CD8-positive, alpha-beta T cell (primary cell): ENCODE measurements at regions of chr1 and their contacts with region 1.

Region 1: DNA sequence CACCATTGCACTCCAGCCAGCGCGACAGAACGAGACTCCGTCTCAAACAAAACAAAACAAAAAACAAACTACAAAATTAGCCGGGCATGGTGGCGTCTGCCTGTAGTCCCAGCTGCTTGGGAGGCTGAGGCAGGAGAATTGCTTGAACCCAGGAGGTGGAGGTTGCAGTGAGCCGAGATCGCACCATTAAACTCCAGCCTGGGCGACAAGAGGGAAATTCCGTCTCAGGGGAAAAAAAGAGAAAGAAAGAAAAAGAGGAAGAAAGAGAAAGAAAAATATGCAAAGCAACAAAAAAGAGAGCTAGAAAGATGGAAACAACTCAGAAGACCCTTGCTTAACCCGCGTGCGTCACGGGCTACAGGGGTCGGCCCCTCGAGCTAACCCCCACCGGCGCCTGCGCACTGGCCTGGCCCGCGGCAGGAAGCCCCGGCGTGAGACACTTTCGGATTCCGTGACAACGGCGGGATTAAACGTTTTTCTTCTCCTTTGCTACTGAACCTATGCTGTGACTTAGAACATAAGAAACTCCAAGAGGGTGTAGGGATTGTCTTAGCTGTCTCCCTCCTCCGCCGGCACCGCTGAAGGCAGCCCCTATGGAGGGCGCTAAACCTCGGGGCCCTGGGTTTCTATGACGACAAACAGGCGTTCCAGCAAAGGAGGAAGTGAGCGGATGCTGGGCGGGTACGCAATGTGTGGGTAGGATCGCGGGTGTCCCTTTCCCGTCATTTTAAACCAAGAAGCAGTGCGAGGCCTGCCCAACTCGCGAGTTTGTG is at the start of gene AXDND1:
- DNase-seq: peak; percentile 80 to 96 (median 90)
- ATAC-seq: peak; percentile 92
- H3K4me3 ChIP-seq: peak within 1 kb of the TSS; percentile 72 to 73
- H3K4me3 Mint-ChIP-seq: peak within 1 kb of the TSS; percentile 99
- H3K27ac ChIP-seq: peak within 1 kb of the TSS; percentile 92 to 99
- H3K27ac Mint-ChIP-seq: peak within 1 kb of the TSS; percentile 100
- H3K4me1 ChIP-seq: peaks cover 6% of the 10 kb centered on the region
- H3K4me1 Mint-ChIP-seq: peaks cover 12% of the 10 kb centered on the region
- H3K27me3 ChIP-seq: no peaks in the 10 kb centered on the region
- H3K27me3 Mint-ChIP-seq: no peaks in the 10 kb centered on the region
- CTCF ChIP-seq: no peak
- total RNA-seq, gene AXDND1: 0.98 to 1.6 TPM

Region 2: DNA sequence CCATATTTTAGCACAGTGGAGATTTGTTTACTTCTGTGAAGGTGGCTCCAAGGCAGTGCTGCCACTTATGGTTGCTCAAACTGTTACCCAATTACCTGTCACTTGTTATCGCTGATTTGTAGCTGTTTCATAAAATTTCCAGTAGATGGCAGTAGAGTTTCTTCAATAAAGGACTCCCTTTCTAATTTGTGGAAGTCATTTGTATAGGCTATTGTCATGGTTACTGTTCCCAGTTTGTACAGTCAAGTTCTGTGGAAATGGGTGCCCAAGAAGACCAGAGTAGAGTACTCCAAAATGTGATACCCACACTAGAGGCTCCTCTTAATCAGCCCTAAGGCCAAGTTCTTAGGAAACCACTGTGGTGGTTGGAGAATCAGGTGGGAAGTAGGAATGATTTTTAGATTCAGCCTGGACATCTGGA is 1054.8 kb before region 1 on chr1:
- CTCF ChIA-PET with region 1: no interaction called
- POLR2A ChIA-PET with region 1: no interaction called
- intact Hi-C with region 1: loop called in 1 of 2 experiments (anchors 5 kb)
- DNase-seq: peak in 2 of 9 experiments; percentile 16 to 42
- ATAC-seq: no peak
- H3K4me3 ChIP-seq: no peak overlapping the region
- H3K4me3 Mint-ChIP-seq: no peak overlapping the region
- H3K27ac ChIP-seq: no peak overlapping the region
- H3K27ac Mint-ChIP-seq: no peak overlapping the region
- H3K4me1 ChIP-seq: no peaks in the 10 kb centered on the region
- H3K4me1 Mint-ChIP-seq: no peaks in the 10 kb centered on the region
- H3K27me3 ChIP-seq: no peaks in the 10 kb centered on the region
- H3K27me3 Mint-ChIP-seq: no peaks in the 10 kb centered on the region
- CTCF ChIP-seq: peak; percentile 54

Region 3: GRCh38 chr1:178725603-178726517 is 639.6 kb before region 1 on chr1:
- CTCF ChIA-PET with region 1: no interaction called
- POLR2A ChIA-PET with region 1: no interaction called
- intact Hi-C with region 1: loop called (anchors 1 to 5 kb)
- DNase-seq: peak in 8 of 9 experiments; percentile 31 to 85 (median 62)
- ATAC-seq: peak; percentile 81
- H3K4me3 ChIP-seq: peak overlapping the region; percentile 67 to 90
- H3K4me3 Mint-ChIP-seq: peak overlapping the region; percentile 85
- H3K27ac ChIP-seq: peak overlapping the region; percentile 58 to 69
- H3K27ac Mint-ChIP-seq: peak overlapping the region; percentile 75
- H3K4me1 ChIP-seq: peaks cover 10% of the 10 kb centered on the region
- H3K4me1 Mint-ChIP-seq: peaks cover 23% of the 10 kb centered on the region
- H3K27me3 ChIP-seq: no peaks in the 10 kb centered on the region
- H3K27me3 Mint-ChIP-seq: peaks cover 3% of the 10 kb centered on the region
- CTCF ChIP-seq: no peak

Region 4: GRCh38 chr1:179002552-179003345 is 362.8 kb before region 1 on chr1:
- CTCF ChIA-PET with region 1: interaction called, 10 read pairs
- POLR2A ChIA-PET with region 1: no interaction called
- intact Hi-C with region 1: loop called in 1 of 2 experiments (anchors 1 kb)
- DNase-seq: peak; percentile 40 to 83 (median 71)
- ATAC-seq: peak; percentile 76
- H3K4me3 ChIP-seq: no peak overlapping the region
- H3K4me3 Mint-ChIP-seq: no peak overlapping the region
- H3K27ac ChIP-seq: no peak overlapping the region
- H3K27ac Mint-ChIP-seq: no peak overlapping the region
- H3K4me1 ChIP-seq: peaks cover 24% of the 10 kb centered on the region
- H3K4me1 Mint-ChIP-seq: peaks cover 20% of the 10 kb centered on the region
- H3K27me3 ChIP-seq: no peaks in the 10 kb centered on the region
- H3K27me3 Mint-ChIP-seq: no peaks in the 10 kb centered on the region
- CTCF ChIP-seq: peak; percentile 91

Region 5: GRCh38 chr1:179121159-179121938 is 244.2 kb before region 1 on chr1:
- CTCF ChIA-PET with region 1: interaction called, 75 read pairs
- POLR2A ChIA-PET with region 1: interaction called, 3 read pairs
- intact Hi-C with region 1: loop called (anchors 1 kb)
- DNase-seq: peak in 7 of 9 experiments; percentile 6 to 63 (median 50)
- ATAC-seq: peak; percentile 44
- H3K4me3 ChIP-seq: no peak overlapping the region
- H3K4me3 Mint-ChIP-seq: no peak overlapping the region
- H3K27ac ChIP-seq: no peak overlapping the region
- H3K27ac Mint-ChIP-seq: no peak overlapping the region
- H3K4me1 ChIP-seq: no peaks in the 10 kb centered on the region
- H3K4me1 Mint-ChIP-seq: no peaks in the 10 kb centered on the region
- H3K27me3 ChIP-seq: no peaks in the 10 kb centered on the region
- H3K27me3 Mint-ChIP-seq: no peaks in the 10 kb centered on the region
- CTCF ChIP-seq: peak; percentile 55

Region 6: DNA sequence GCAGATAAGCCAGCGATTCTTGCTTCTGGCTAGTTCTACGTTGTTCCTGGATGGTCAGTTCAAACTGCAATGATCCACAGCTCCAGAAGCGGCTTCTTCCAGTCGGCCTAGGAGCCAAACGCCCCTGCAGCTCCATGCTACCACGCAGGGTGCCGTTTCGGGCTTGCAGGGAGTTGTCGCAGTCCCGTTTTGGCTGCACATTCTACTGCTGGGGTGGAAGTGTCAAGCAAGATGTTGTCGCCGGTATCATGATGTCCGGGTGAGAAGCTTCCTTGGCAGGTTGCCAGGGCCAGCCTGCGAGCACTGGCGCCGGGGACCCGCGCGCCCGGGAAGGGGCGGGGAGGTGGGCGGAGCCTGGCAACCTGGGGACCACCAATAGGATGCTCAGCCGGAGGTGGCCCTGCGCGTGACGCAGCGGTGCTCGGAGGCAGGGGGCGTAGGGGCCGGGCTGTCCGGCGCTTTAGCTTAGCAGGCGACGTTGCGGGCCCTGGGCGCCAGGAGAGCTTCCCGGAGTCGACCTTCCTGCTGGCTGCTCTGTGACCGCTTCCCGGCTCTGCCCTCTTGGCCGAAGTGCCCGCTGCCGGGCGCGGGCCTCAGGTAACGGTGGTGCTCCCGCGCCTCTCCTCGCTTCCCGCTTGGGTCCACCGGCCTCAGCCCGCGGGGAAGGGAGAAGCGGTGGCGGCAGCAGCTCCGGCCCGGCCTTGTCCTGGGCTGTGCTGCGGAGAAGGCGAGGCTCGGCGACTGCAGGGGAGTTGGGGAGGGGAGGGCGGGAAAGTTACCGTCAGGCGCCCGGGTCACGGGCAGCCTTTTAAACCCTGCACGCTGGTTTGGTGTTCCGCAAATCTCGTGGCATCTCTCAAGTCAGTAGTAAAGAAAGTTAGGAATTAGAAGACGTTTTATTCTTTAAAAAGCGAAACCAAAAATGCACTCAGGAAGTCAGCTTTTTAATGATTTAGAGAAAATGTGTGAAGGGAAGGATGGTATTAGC is 71.9 kb before region 1 on chr1 and contains the start of gene SOAT1:
- CTCF ChIA-PET with region 1: interaction called, 12 read pairs
- POLR2A ChIA-PET with region 1: interaction called, 19 read pairs
- intact Hi-C with region 1: loop called (anchors 1 kb)
- DNase-seq: peak; percentile 82 to 97 (median 95)
- ATAC-seq: peak; percentile 96
- H3K4me3 ChIP-seq: peak within 1 kb of the TSS; percentile 88 to 92
- H3K4me3 Mint-ChIP-seq: peak within 1 kb of the TSS; percentile 91
- H3K27ac ChIP-seq: peak within 1 kb of the TSS; percentile 92 to 93
- H3K27ac Mint-ChIP-seq: peak within 1 kb of the TSS; percentile 93
- H3K4me1 ChIP-seq: peaks cover 39% of the 10 kb centered on the region
- H3K4me1 Mint-ChIP-seq: peaks cover 48% of the 10 kb centered on the region
- H3K27me3 ChIP-seq: no peaks in the 10 kb centered on the region
- H3K27me3 Mint-ChIP-seq: no peaks in the 10 kb centered on the region
- CTCF ChIP-seq: no peak
- total RNA-seq, gene SOAT1: 34.9 TPM

Region 7: GRCh38 chr1:180154325-180155181 is 789.0 kb after region 1 on chr1 and contains the start of gene QSOX1:
- CTCF ChIA-PET with region 1: no interaction called
- POLR2A ChIA-PET with region 1: no interaction called
- intact Hi-C with region 1: loop called in 1 of 2 experiments (anchors 10 kb)
- DNase-seq: peak; percentile 77 to 95 (median 88)
- ATAC-seq: peak; percentile 96
- H3K4me3 ChIP-seq: peak within 1 kb of the TSS; percentile 86
- H3K4me3 Mint-ChIP-seq: peak within 1 kb of the TSS; percentile 91
- H3K27ac ChIP-seq: peak within 1 kb of the TSS; percentile 60 to 62
- H3K27ac Mint-ChIP-seq: peak within 1 kb of the TSS; percentile 87
- H3K4me1 ChIP-seq: peaks cover 22% of the 10 kb centered on the region
- H3K4me1 Mint-ChIP-seq: peaks cover 43% of the 10 kb centered on the region
- H3K27me3 ChIP-seq: no peaks in the 10 kb centered on the region
- H3K27me3 Mint-ChIP-seq: no peaks in the 10 kb centered on the region
- CTCF ChIP-seq: no peak
- total RNA-seq, gene QSOX1: 12.8 to 12.9 TPM